Calu3 (cell line): ENCODE measurements at regions of chr3 and their contacts with region 1.

Region 1: DNA sequence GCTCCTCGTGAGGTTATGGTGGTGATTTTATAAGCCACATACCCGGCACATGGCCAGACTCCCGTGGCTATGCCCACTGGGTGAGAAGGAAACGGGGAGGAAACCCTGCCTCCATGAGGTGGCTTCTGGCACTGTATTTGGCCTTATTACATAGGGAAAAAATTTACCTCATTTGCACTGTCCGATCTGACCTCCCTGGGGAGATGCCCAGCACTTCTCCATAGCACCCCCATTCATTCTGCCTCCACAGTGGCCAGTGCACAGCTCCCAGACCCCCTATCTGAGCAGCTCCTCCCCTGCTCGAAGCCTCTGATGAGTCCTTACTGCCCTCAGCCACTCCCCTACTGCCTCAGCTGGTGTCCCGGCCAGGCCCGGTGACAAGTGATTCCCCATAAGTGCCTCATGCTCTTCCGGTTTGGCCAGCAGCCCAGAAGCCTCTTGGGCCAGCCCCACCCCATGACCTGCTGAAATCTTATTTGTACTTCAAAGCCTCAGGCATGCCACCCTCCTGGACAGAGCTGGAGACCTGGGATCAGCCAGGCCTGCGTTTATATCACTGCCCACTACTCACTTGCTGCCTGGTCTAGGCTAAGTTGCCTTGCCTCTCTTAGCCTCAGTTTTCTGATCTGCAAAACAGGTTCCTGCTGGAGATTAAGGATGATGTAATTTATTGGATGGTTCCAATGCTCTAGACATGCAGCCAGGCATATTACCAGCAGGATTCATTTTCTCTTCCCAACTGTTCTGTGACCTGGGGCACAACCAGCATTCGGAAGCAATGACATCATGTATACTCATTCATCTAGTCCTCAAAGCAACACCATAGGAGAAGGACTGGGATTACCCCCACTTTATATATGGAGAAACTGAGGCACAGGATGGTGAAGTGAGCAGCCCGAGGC is 30.6 kb upstream of the SLC6A6 start:
- DNase-seq: peak; percentile 89
- H3K4me3 Mint-ChIP-seq: no peak overlapping the region
- H3K27ac Mint-ChIP-seq: peak overlapping the region; percentile 51
- H3K4me1 Mint-ChIP-seq: peaks cover 48% of the 10 kb centered on the region
- H3K27me3 Mint-ChIP-seq: peaks cover 11% of the 10 kb centered on the region
- CTCF ChIP-seq: no peak

Region 2: GRCh38 chr3:14319654-14320182 is 52.1 kb before region 1 on chr3:
- CTCF ChIA-PET with region 1: interaction called, 3 read pairs
- intact Hi-C with region 1: loop called (anchors 5 kb)
- DNase-seq: peak; percentile 78
- H3K4me3 Mint-ChIP-seq: peak overlapping the region; percentile 39
- H3K27ac Mint-ChIP-seq: peak overlapping the region; percentile 14
- H3K4me1 Mint-ChIP-seq: peaks cover 28% of the 10 kb centered on the region
- H3K27me3 Mint-ChIP-seq: no peaks in the 10 kb centered on the region
- CTCF ChIP-seq: no peak